Body of pancreas (tissue), 4 donors: ENCODE measurements at regions of chr10 and their contacts with region 1.

Region 1: GRCh38 chr10:68156373-68157185 is 47.3 kb downstream of the MYPN start:
- DNase-seq: peak; percentile 69 to 80 (median 75)
- ATAC-seq: peak; percentile 25
- H3K4me3 ChIP-seq: no peak overlapping the region
- H3K27ac ChIP-seq: no peak overlapping the region
- H3K4me1 ChIP-seq: peaks cover 14% of the 10 kb centered on the region
- H3K27me3 ChIP-seq: no peaks in the 10 kb centered on the region
- CTCF ChIP-seq: peak; percentile 59 to 87 (median 76)
- POLR2A ChIP-seq: no peak

Region 2: GRCh38 chr10:67849331-67850011 is 307.1 kb before region 1 on chr10:
- intact Hi-C with region 1: loop called (anchors 10 kb)
- DNase-seq: peak; percentile 94 to 96 (median 95)
- ATAC-seq: peak; percentile 99
- H3K4me3 ChIP-seq: peak overlapping the region; percentile 73 to 82
- H3K27ac ChIP-seq: peak overlapping the region; percentile 92 to 98 (median 94)
- H3K4me1 ChIP-seq: peaks cover 6% of the 10 kb centered on the region
- H3K27me3 ChIP-seq: no peaks in the 10 kb centered on the region
- CTCF ChIP-seq: peak in 3 of 7 experiments; percentile 22 to 29 (median 28)
- POLR2A ChIP-seq: peak in 2 of 3 donors; percentile 73 to 79

Region 3: GRCh38 chr10:68271196-68271882 is 114.8 kb after region 1 on chr10:
- intact Hi-C with region 1: no loop called
- DNase-seq: no peak
- ATAC-seq: no peak
- H3K4me3 ChIP-seq: no peak overlapping the region
- H3K27ac ChIP-seq: no peak overlapping the region
- H3K4me1 ChIP-seq: no peaks in the 10 kb centered on the region
- H3K27me3 ChIP-seq: no peaks in the 10 kb centered on the region
- CTCF ChIP-seq: no peak
- POLR2A ChIP-seq: no peak

Region 4: GRCh38 chr10:68628576-68629127 is 472.1 kb after region 1 on chr10:
- intact Hi-C with region 1: no loop called
- DNase-seq: no peak
- ATAC-seq: no peak
- H3K4me3 ChIP-seq: no peak overlapping the region
- H3K27ac ChIP-seq: no peak overlapping the region
- H3K4me1 ChIP-seq: no peaks in the 10 kb centered on the region
- H3K27me3 ChIP-seq: no peaks in the 10 kb centered on the region
- CTCF ChIP-seq: no peak
- POLR2A ChIP-seq: no peak